HEK293T (cell line): ENCODE measurements at regions of chr22 and their contacts with region 1.

Region 1: DNA sequence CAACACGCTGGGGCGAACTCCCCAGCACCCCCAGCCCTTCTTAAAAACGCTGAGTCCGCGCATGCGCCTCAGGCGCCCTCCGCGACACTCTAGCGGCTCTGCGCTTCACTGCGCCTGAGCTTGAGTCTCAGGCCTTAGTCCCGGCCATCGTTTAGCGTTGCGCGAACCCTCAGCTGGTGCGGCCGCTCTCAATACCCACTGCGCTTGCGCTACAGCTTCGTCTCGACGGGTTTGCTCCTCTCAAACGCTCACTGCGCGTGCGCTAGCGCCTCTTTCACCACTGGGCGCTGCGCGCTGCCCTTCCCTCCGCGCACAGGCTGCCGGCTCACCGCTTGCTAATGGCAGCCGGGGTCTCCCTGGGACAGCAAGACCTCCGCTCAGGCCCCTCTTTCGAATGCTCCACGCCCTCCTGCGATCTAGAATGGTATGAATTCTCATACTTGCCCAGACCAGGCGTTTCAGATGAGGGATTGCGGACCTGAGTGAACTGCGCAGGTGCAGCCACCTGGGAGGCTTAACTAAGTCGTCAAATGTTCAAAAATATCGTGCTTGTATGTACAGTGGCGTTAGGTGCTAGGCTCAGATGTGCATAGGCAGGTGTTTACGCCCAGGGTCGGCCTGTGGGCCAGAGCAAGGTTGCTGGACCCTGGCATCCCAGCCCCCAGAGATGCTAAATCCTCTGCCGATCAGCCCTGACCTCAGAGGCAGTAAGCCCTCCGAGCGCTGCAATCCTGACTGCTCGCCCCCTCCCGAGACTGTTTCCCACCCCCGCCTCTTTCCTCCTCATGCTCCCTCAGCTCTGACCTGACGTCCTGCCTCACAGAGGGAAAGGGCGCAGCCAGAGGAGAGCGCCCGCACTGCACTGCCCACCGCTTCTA is at the start of gene SLC2A11:
- DNase-seq: peak; percentile 99

Region 2: GRCh38 chr22:23743303-23743705 is 114.5 kb before region 1 on chr22:
- CTCF ChIA-PET with region 1: no interaction called
- POLR2A ChIA-PET with region 1: interaction called, 13 read pairs
- DNase-seq: no peak

Region 3: GRCh38 chr22:23774743-23775566 is 82.9 kb before region 1 on chr22:
- CTCF ChIA-PET with region 1: interaction called, 3 read pairs
- POLR2A ChIA-PET with region 1: interaction called, 16 read pairs
- DNase-seq: no peak

Region 4: GRCh38 chr22:23826465-23827199 is 31.2 kb before region 1 on chr22:
- CTCF ChIA-PET with region 1: interaction called, 3 read pairs
- POLR2A ChIA-PET with region 1: interaction called, 14 read pairs
- DNase-seq: no peak

Region 5: GRCh38 chr22:23868580-23868979 is 10.7 kb after region 1 on chr22:
- CTCF ChIA-PET with region 1: interaction called, 4 read pairs
- POLR2A ChIA-PET with region 1: interaction called, 25 read pairs
- DNase-seq: no peak

Region 6: DNA sequence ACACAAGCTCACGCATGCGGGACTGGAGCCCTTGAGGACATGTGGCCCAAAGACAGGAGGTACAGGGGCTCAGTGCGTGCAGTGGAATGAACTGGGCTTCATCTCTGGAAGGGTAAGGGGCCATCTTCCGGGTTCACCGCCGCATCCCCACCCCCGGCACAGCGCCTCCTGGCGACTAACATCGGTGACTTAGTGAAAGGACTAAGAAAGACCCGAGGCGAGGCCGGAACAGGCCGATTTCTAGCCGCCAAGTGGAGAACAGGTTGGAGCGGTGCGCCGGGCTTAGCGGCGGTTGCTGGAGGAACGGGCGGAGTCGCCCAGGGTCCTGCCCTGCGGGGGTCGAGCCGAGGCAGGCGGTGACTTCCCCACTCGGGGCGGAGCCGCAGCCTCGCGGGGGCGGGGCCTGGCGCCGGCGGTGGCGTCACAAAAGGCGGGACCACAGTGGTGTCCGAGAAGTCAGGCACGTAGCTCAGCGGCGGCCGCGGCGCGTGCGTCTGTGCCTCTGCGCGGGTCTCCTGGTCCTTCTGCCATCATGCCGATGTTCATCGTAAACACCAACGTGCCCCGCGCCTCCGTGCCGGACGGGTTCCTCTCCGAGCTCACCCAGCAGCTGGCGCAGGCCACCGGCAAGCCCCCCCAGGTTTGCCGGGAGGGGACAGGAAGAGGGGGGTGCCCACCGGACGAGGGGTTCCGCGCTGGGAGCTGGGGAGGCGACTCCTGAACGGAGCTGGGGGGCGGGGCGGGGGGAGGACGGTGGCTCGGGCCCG is 36.3 kb after region 1 on chr22 and contains the start of gene MIF:
- CTCF ChIA-PET with region 1: interaction called, 6 read pairs
- POLR2A ChIA-PET with region 1: interaction called, 85 read pairs
- DNase-seq: peak; percentile 99

Region 7: DNA sequence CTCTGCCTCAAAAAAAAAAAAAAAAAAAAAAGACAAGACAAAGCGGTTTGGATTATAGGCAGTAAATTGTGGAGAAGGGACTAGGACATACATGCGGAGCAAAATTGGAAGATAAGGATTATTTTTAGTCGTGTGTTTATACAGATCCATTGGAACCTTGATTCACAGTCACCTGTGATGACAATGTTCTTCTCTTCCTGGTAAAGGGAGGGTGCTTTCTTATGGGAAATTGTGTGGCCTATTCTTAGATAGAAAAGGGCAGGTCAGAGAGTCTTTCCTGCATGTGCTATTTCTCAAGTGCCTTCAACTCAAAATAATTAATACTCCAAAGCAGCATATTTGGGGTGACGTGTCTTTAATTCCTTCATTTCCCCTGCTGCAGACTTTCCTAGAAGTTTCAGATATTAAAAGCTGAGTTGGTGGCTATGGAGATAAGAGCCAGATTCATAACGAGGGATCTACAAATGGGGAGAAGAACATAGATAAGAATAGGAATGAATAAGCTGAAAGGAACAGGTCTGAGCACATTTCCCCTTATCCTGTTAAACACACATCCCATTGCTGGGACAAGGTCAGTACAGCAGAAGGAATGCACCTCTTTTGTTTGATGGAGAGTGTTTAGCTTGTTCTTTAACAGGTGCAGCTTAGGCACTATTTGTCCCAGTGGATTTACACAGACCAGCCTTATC is 80.6 kb after region 1 on chr22:
- CTCF ChIA-PET with region 1: no interaction called
- POLR2A ChIA-PET with region 1: no interaction called
- DNase-seq: no peak